ENCODE measurements at regions of chr4 and their contacts with region 1.

Region 1: DNA sequence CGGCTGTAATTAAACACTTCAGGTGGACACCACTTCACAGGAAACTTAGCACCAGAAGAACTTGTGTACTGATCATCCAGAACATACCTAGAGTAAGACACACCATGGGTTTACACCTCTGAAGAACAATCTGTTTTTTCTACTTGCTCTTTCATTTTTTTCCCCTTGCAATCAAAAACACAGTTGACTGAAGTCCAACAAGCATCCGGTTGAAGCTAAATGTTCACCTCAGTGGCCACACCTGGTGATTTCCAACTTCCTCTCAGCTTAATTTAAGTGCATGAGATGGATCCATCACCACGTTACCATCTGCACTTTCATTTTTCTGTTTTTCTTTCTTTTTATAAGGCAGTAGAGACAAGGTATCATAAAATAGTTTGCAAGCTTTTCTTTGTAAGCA is 4.9 kb upstream of the TXK start:
- DNase-seq: peak; percentile 71
- H3K4me3 Mint-ChIP-seq: peak overlapping the region; percentile 54
- H3K27ac Mint-ChIP-seq: peak overlapping the region; percentile 91
- H3K4me1 Mint-ChIP-seq: peaks cover 69% of the 10 kb centered on the region
- H3K27me3 Mint-ChIP-seq: no peaks in the 10 kb centered on the region

Region 2: DNA sequence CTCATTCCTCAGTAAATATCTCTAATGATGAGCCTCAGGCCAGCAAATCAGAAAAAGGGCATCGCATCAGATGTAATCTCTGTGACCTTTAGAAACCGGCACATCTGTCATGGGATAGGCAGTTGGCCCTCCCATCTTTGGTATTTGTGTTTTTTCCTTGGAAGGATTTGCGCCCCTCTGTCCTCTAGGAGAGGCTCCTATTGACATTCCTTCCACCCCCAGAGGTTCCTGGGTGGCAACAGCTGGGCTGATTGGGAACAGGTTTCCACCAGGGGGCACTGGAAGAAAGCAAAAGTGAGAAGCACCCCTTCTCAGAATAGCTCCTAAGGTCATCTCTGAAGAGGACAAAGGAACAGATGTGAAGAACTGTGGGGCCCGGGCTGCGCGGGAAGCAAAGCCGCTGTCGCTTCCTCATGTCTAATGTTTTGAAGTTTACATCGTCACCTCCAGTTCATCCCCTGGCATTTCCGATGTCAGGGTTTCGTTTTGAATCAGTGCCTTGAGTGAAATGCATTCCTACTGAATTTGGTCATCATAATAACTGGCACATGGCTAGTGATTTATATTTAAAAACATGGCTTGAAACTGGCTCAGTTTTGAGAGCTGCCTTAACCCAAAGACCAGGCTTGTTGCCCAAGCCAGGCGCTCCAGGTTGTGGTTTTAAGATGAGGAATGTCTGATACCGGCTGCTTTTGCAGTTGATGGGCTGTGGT is 11.1 kb before region 1 on chr4:
- CTCF ChIA-PET with region 1: interaction called, 33 read pairs
- POLR2A ChIA-PET with region 1: interaction called, 25 read pairs
- DNase-seq: peak; percentile 86
- H3K4me3 Mint-ChIP-seq: peak overlapping the region; percentile 60
- H3K27ac Mint-ChIP-seq: peak overlapping the region; percentile 93
- H3K4me1 Mint-ChIP-seq: peaks cover 84% of the 10 kb centered on the region
- H3K27me3 Mint-ChIP-seq: no peaks in the 10 kb centered on the region